Mammary epithelial cell (primary cell): ENCODE measurements at regions of chr9 and their contacts with region 1.

Region 1: GRCh38 chr9:121545875-121546423 is 46.3 kb upstream of the GGTA1 start:
- DNase-seq: peak; percentile 93
- H3K4me3 ChIP-seq: no peak overlapping the region
- H3K27ac ChIP-seq: no peak overlapping the region
- H3K4me1 ChIP-seq: peaks cover 13% of the 10 kb centered on the region
- H3K27me3 ChIP-seq: no peaks in the 10 kb centered on the region
- CTCF ChIP-seq: peak; percentile 87 to 98

Region 2: DNA sequence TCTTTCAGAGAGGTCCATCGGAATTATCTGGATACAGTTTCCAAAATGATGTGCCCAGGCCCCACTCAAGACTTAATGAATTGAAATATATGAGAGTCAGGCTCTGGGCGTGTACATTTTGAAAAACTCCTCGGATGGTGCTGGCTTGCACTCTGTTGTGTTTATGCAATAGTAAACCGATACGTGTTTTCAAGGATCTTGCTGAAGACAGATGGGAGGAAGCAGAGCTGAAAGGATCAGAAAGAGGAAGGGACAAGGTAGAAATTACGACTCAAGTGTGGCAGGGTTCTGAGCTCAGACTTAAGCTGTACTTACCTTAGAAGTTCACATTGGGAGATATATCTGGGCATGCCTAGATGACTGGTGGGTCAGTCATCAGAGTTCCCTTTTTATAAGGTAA is 162.2 kb before region 1 on chr9:
- CTCF ChIA-PET with region 1: no interaction called
- dilution Hi-C with region 1: no loop called
- in situ Hi-C with region 1: no loop called
- intact Hi-C with region 1: no loop called
- DNase-seq: no peak
- H3K4me3 ChIP-seq: no peak overlapping the region
- H3K27ac ChIP-seq: no peak overlapping the region
- H3K4me1 ChIP-seq: no peaks in the 10 kb centered on the region
- H3K27me3 ChIP-seq: no peaks in the 10 kb centered on the region
- CTCF ChIP-seq: no peak

Region 3: GRCh38 chr9:121529237-121529987 is 16.5 kb before region 1 on chr9:
- CTCF ChIA-PET with region 1: interaction called, 29 read pairs
- dilution Hi-C with region 1: no loop called
- in situ Hi-C with region 1: no loop called
- intact Hi-C with region 1: no loop called
- DNase-seq: peak; percentile 77
- H3K4me3 ChIP-seq: no peak overlapping the region
- H3K27ac ChIP-seq: no peak overlapping the region
- H3K4me1 ChIP-seq: peaks cover 6% of the 10 kb centered on the region
- H3K27me3 ChIP-seq: no peaks in the 10 kb centered on the region
- CTCF ChIP-seq: no peak

Region 4: GRCh38 chr9:121573717-121574485 is 28.0 kb after region 1 on chr9:
- CTCF ChIA-PET with region 1: interaction called, 5 read pairs
- dilution Hi-C with region 1: no loop called
- in situ Hi-C with region 1: no loop called
- intact Hi-C with region 1: loop called (anchors 2 kb)
- DNase-seq: no peak
- H3K4me3 ChIP-seq: no peak overlapping the region
- H3K27ac ChIP-seq: no peak overlapping the region
- H3K4me1 ChIP-seq: peaks cover 2% of the 10 kb centered on the region
- H3K27me3 ChIP-seq: peaks cover 2% of the 10 kb centered on the region
- CTCF ChIP-seq: peak in 1 of 2 donors; percentile 24

Region 5: DNA sequence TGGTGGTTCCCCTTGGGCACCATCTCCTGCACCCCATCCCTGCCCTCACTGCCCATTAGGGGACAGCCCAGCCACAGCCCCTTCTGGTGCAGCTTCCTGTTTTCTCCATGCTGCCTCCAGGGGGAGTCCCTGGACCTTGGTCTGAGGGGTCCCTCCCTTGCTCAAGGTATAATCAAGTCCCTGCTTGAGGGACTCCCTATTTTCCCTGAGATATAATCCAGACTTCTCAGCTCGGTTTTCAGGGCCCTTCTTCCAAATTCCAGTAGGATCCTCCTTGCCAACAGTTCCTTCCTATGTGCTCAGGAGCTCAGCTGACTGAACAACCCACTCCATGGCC is 75.1 kb after region 1 on chr9:
- CTCF ChIA-PET with region 1: no interaction called
- dilution Hi-C with region 1: no loop called
- in situ Hi-C with region 1: no loop called
- intact Hi-C with region 1: loop called (anchors 2 kb)
- DNase-seq: no peak
- H3K4me3 ChIP-seq: no peak overlapping the region
- H3K27ac ChIP-seq: no peak overlapping the region
- H3K4me1 ChIP-seq: no peaks in the 10 kb centered on the region
- H3K27me3 ChIP-seq: peaks cover 1% of the 10 kb centered on the region
- CTCF ChIP-seq: peak; percentile 28 to 58

Region 6: GRCh38 chr9:121727295-121728020 is 181.5 kb after region 1 on chr9:
- CTCF ChIA-PET with region 1: interaction called, 24 read pairs
- dilution Hi-C with region 1: no loop called
- in situ Hi-C with region 1: no loop called
- intact Hi-C with region 1: no loop called
- DNase-seq: no peak
- H3K4me3 ChIP-seq: no peak overlapping the region
- H3K27ac ChIP-seq: no peak overlapping the region
- H3K4me1 ChIP-seq: peaks cover 30% of the 10 kb centered on the region
- H3K27me3 ChIP-seq: no peaks in the 10 kb centered on the region
- CTCF ChIP-seq: no peak

Region 7: GRCh38 chr9:122005597-122005996 is 459.6 kb after region 1 on chr9:
- CTCF ChIA-PET with region 1: no interaction called
- dilution Hi-C with region 1: no loop called
- in situ Hi-C with region 1: loop called in 1 of 2 experiments (anchors 10 kb)
- intact Hi-C with region 1: no loop called
- DNase-seq: peak; percentile 23
- H3K4me3 ChIP-seq: no peak overlapping the region
- H3K27ac ChIP-seq: no peak overlapping the region
- H3K4me1 ChIP-seq: no peaks in the 10 kb centered on the region
- H3K27me3 ChIP-seq: no peaks in the 10 kb centered on the region
- CTCF ChIP-seq: peak; percentile 59 to 72